GM18951 (cell line): ENCODE measurements at regions of chr20 and their contacts with region 1.

Region 1: GRCh38 chr20:30419466-30419865 is 838.0 kb upstream of the DEFB115 start:
- POLR2A ChIP-seq: no peak

Region 2: GRCh38 chr20:28562510-28562898 is 1857.0 kb before region 1 on chr20:
- in situ Hi-C with region 1: loop called (anchors 5 kb)
- POLR2A ChIP-seq: no peak